T-cell (primary cell): ENCODE measurements at regions of chr13 and their contacts with region 1.

Region 1: GRCh38 chr13:27270594-27271520 is at the start of gene RASL11A:
- DNase-seq: peak; percentile 17 to 81 (median 60)
- ATAC-seq: peak; percentile 89 to 94 (median 94)
- H3K4me3 ChIP-seq: peak within 1 kb of the TSS; percentile 69 to 86
- H3K4me3 Mint-ChIP-seq: peak within 1 kb of the TSS; percentile 80 to 95 (median 89)
- H3K27ac ChIP-seq: no peak within 1 kb of the TSS
- H3K27ac Mint-ChIP-seq: peak within 1 kb of the TSS; percentile 39 to 77
- H3K4me1 ChIP-seq: peaks cover 0 to 18% of the 10 kb centered on the region in 2 experiments
- H3K4me1 Mint-ChIP-seq: peaks cover 20 to 24% (median 23%) of the 10 kb centered on the region in 3 donors
- H3K27me3 ChIP-seq: peaks cover 0 to 19% of the 10 kb centered on the region in 2 experiments
- H3K27me3 Mint-ChIP-seq: peaks cover 4 to 13% of the 10 kb centered on the region in 2 donors
- total RNA-seq, gene RASL11A: 0.96 to 5.4 (median 2.1) TPM

Region 2: GRCh38 chr13:26425443-26426358 is 845.2 kb before region 1 on chr13:
- CTCF ChIA-PET with region 1: no interaction called
- POLR2A ChIA-PET with region 1: no interaction called
- DNase-seq: no peak
- ATAC-seq: no peak
- H3K4me3 ChIP-seq: no peak overlapping the region
- H3K4me3 Mint-ChIP-seq: no peak overlapping the region
- H3K27ac ChIP-seq: no peak overlapping the region
- H3K27ac Mint-ChIP-seq: no peak overlapping the region
- H3K4me1 ChIP-seq: no peaks in the 10 kb centered on the region
- H3K4me1 Mint-ChIP-seq: no peaks in the 10 kb centered on the region
- H3K27me3 ChIP-seq: peaks cover 0 to 15% of the 10 kb centered on the region in 2 experiments
- H3K27me3 Mint-ChIP-seq: peaks cover 21 to 23% of the 10 kb centered on the region in 2 donors

Region 3: GRCh38 chr13:27226991-27227390 is 43.9 kb before region 1 on chr13:
- CTCF ChIA-PET with region 1: no interaction called
- POLR2A ChIA-PET with region 1: no interaction called
- DNase-seq: no peak
- ATAC-seq: peak in 1 of 4 experiments; percentile 51
- H3K4me3 ChIP-seq: no peak overlapping the region
- H3K4me3 Mint-ChIP-seq: peak overlapping the region in 2 of 3 donors; percentile 17 to 45
- H3K27ac ChIP-seq: no peak overlapping the region
- H3K27ac Mint-ChIP-seq: no peak overlapping the region
- H3K4me1 ChIP-seq: peaks cover 0 to 3% of the 10 kb centered on the region in 2 experiments
- H3K4me1 Mint-ChIP-seq: peaks cover 10 to 15% (median 11%) of the 10 kb centered on the region in 3 donors
- H3K27me3 ChIP-seq: peaks cover 0 to 8% of the 10 kb centered on the region in 2 experiments
- H3K27me3 Mint-ChIP-seq: peaks cover 3 to 10% of the 10 kb centered on the region in 2 donors

Region 4: DNA sequence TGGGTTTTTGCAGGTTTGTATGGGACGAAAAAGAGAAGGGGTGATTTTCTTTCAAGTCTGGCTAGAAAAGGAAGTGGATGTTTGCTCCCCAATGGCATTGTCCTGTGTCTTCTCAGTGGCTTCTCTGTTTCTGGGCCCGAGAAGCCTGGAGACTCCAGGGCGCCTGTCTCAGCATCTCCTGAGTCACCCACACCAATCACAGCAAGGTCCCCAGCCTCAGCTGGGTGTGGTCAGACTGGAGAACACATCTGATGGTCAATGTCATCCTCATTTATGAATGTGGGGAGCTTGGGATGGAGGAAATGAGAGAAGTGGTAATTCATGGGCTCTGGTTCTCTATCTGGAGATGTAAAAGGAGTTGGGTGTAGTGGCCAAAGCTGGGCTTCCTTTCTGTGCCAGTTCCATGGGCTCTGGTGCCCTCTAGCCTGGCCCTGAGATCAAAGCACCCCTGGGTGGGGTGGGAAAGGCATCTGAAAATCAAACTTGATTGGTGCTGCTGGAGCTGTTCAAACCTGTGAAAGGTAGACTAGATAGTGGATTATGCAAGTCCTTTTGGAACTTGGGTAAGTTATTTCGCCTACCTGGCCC is 13.1 kb after region 1 on chr13:
- CTCF ChIA-PET with region 1: interaction called in 1 of 2 experiments, 8 read pairs
- POLR2A ChIA-PET with region 1: interaction called in 1 of 2 experiments, 12 read pairs
- DNase-seq: peak in 1 of 35 experiments; percentile 20
- ATAC-seq: no peak
- H3K4me3 ChIP-seq: no peak overlapping the region
- H3K4me3 Mint-ChIP-seq: no peak overlapping the region
- H3K27ac ChIP-seq: no peak overlapping the region
- H3K27ac Mint-ChIP-seq: no peak overlapping the region
- H3K4me1 ChIP-seq: no peaks in the 10 kb centered on the region
- H3K4me1 Mint-ChIP-seq: no peaks in the 10 kb centered on the region
- H3K27me3 ChIP-seq: peaks cover 0 to 8% of the 10 kb centered on the region in 2 experiments
- H3K27me3 Mint-ChIP-seq: peaks cover 0 to 3% of the 10 kb centered on the region in 2 donors

Region 5: DNA sequence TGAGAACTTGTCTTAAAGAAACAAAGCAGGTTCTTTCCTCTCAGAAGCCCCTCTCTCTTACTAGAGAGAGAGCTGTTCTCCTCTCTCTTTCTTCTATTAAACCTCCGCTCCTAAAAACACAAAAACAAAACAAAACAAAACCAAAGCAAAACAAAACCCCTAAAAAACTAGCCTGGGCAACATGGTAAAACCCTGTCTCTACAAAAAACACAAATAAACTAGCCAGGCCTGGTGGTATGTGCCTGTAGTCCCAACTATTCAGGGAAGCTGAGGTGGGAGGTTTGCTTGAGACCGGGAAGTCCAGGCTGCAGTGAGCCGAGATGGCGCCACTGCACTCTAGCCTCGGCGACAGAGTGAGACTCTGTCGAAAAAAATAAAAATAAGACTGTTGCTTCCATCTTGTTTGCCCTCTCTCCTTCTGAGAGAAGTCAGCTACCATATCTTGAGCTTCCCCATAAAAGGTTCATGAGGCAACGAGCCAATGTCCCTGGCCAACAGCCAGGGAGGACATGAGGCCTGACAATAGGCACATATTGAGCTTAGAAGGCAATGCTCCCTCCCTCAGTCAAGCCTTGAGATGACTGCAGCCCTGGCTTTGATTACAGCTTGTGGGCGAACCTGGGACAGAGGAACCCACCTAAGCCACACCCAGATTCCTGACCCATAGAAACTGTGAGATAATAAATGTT is 847.0 kb after region 1 on chr13:
- CTCF ChIA-PET with region 1: interaction called in 1 of 2 experiments, 10 read pairs
- POLR2A ChIA-PET with region 1: no interaction called
- DNase-seq: no peak
- ATAC-seq: no peak
- H3K4me3 ChIP-seq: no peak overlapping the region
- H3K4me3 Mint-ChIP-seq: no peak overlapping the region
- H3K27ac ChIP-seq: no peak overlapping the region
- H3K27ac Mint-ChIP-seq: no peak overlapping the region
- H3K4me1 ChIP-seq: no peaks in the 10 kb centered on the region
- H3K4me1 Mint-ChIP-seq: peaks cover 0 to 7% (median 5%) of the 10 kb centered on the region in 3 donors
- H3K27me3 ChIP-seq: peaks cover 0 to 9% of the 10 kb centered on the region in 2 experiments
- H3K27me3 Mint-ChIP-seq: peaks cover 4 to 11% of the 10 kb centered on the region in 2 donors